Thyroid gland (tissue), 4 donors: ENCODE measurements at regions of chr1 and their contacts with region 1.

Region 1: DNA sequence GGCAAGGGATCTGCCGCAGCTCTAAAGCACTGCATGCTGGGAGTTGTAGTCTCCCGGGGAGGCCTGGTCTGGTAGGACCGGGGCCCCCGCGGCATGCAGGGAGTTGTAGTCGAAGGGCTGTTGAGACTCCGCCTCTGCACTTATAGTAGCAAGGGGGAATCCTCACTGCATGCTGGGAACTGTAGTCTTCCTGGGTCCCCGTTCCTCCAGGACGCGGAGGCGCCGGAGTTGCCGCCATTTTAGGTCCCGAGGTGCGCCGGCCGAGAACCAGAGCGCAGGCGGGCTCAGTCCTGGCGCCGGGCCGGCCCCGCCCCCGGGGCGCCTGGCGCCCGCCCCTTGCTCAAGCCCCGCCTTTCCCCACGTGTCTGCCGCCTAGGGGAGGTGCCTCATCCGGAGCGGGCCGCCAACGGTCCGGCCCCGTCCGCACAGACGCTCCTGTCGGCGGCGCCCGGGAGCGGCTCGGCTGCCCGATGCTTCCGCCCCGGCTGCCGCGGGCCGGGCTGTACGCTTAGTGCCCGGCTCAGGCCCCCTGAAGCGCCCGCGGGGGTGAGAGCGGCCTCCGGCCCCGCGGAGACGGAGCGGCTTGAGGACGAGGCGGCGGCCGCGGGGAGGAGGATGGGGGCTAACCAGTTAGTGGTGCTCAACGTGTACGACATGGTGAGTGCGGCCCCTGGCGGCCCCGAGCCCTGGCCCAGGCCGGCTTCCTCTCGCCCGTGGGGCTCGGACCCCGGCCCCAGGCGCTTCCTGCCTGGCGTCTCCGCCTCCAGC is at the start of gene DESI2:
- DNase-seq: peak; percentile 99
- H3K4me3 ChIP-seq: peak within 1 kb of the TSS; percentile 71 to 89 (median 80)
- H3K27ac ChIP-seq: peak within 1 kb of the TSS; percentile 91 to 95 (median 94)
- H3K4me1 ChIP-seq: peaks cover 10 to 17% of the 10 kb centered on the region in 2 donors
- H3K27me3 ChIP-seq: no peaks in the 10 kb centered on the region
- CTCF ChIP-seq: peak in 4 of 6 experiments; percentile 12 to 58 (median 42)
- POLR2A ChIP-seq: peak; percentile 92 to 100
- total RNA-seq, gene DESI2: 49.5 to 71.2 (median 57.5) TPM

Region 2: GRCh38 chr1:244304156-244305055 is 348.5 kb before region 1 on chr1:
- intact Hi-C with region 1: no loop called
- DNase-seq: peak in 1 of 2 donors; percentile 12
- H3K4me3 ChIP-seq: no peak overlapping the region
- H3K27ac ChIP-seq: peak overlapping the region; percentile 77 to 93 (median 80)
- H3K4me1 ChIP-seq: peaks cover 34 to 44% of the 10 kb centered on the region in 2 donors
- H3K27me3 ChIP-seq: no peaks in the 10 kb centered on the region
- CTCF ChIP-seq: no peak
- POLR2A ChIP-seq: no peak

Region 3: DNA sequence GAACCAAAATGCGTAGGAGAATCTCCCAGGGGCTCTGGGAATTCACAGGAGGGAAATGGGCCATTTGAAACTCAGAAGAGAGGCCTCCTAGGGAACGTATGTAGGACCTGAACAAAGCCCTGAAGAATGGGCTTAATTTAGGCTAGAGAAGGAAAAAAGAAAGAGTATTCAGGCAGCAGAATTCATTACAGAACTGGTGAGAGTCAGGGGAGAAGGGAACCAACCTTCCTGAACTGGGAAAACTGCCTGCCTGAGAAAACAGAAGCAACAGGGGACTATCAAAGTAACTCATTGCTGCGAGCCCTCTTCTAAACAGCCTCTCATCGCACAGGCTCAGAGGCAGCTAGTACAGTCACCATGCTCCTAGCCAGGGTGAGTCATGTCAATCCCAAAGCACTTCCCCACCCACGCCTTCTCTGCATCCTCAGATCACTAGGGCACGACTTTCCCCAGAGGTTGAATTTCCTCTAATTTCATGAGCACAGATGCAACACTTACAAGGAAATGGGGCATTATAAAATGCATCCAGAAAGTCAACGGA is 299.3 kb before region 1 on chr1:
- intact Hi-C with region 1: no loop called
- DNase-seq: peak; percentile 60 to 62
- H3K4me3 ChIP-seq: no peak overlapping the region
- H3K27ac ChIP-seq: peak overlapping the region; percentile 1 to 78 (median 26)
- H3K4me1 ChIP-seq: peaks cover 10 to 14% of the 10 kb centered on the region in 2 donors
- H3K27me3 ChIP-seq: no peaks in the 10 kb centered on the region
- CTCF ChIP-seq: no peak
- POLR2A ChIP-seq: no peak

Region 4: GRCh38 chr1:244451951-244452795 is 200.7 kb before region 1 on chr1:
- intact Hi-C with region 1: loop called (anchors 5 kb)
- DNase-seq: peak; percentile 100
- H3K4me3 ChIP-seq: peak overlapping the region in 2 of 3 donors; percentile 84 to 99
- H3K27ac ChIP-seq: peak overlapping the region; percentile 95 to 98 (median 96)
- H3K4me1 ChIP-seq: peaks cover 21 to 31% of the 10 kb centered on the region in 2 donors
- H3K27me3 ChIP-seq: no peaks in the 10 kb centered on the region
- CTCF ChIP-seq: peak in 3 of 6 experiments; percentile 52 to 68 (median 57)
- POLR2A ChIP-seq: peak in 1 of 2 donors; percentile 33